SK-N-SH (cell line): ENCODE measurements at regions of chr12 and their contacts with region 1.

Region 1: GRCh38 chr12:32671930-32672780 is 6.9 kb upstream of the DNM1L start:
- DNase-seq: peak; percentile 85
- H3K4me3 ChIP-seq: no peak overlapping the region; a peak in 1 of 4 replicates
- H3K27ac ChIP-seq: peak overlapping the region in 1 of 2 experiments; percentile 36; a peak in 2 of 4 replicates
- H3K4me1 ChIP-seq: peaks cover 0 to 6% of the 10 kb centered on the region in 2 experiments; a peak in 2 of 4 replicates
- H3K27me3 ChIP-seq: no peaks in the 10 kb centered on the region
- CTCF ChIP-seq: peak; percentile 73
- EP300 ChIP-seq: peak in 1 of 2 experiments; percentile 23; a peak in 1 of 4 replicates
- RAD21 ChIP-seq: peak; percentile 90

Region 2: DNA sequence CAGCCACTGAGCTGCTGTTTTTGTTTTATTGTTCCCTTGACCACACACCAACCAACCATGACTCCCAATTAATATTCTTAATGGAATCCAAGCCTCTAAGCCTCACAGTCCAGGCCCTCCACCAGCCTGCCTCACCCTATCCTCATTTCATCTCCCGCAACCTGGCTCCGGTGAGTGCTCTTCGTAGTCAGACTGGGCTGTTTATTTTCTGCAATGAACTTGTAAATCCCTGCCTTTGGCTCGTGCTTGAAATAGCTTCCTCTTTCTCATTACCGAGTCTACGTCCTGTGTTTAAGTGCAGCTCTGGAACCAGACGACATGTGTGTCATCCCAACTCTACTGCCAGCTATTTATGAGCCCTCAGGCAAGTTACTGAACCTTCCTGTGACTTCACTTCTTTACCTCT is 1025.1 kb before region 1 on chr12:
- CTCF ChIA-PET with region 1: interaction called, 10 read pairs
- POLR2A ChIA-PET with region 1: no interaction called
- DNase-seq: peak; percentile 17
- H3K4me3 ChIP-seq: no peak overlapping the region
- H3K27ac ChIP-seq: peak overlapping the region in 1 of 2 experiments; percentile 68; a peak in 2 of 4 replicates
- H3K4me1 ChIP-seq: peaks cover 0 to 15% of the 10 kb centered on the region in 2 experiments; a peak in 2 of 4 replicates
- H3K27me3 ChIP-seq: no peaks in the 10 kb centered on the region
- CTCF ChIP-seq: no peak
- EP300 ChIP-seq: no peak
- RAD21 ChIP-seq: no peak

Region 3: DNA sequence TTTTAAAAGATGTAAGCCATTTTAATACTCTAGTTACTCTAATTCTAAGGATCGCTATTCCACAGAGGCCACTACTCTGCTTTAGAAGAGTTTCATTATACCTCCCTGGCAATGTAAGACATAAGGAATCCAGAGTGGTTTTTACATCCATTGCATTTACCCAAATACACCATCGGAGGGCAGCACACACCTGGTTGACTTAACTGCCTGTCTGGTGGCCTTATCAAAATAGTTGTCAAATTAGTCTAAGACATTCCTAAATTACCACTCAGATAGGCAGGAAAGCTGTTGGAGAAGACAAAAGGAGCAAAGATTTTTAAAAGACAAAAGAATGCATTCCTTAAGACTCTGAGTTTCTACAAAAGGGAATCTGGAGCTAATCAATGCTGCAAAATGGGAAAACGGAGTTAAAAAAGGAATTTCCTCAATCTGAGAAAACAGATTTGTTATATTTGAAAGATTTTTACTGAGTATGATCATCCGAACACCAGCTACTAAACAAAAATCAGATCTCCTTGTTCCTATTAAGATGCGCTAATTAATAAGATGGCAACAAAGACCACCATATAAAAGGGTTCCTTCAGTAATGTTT is 306.6 kb before region 1 on chr12:
- CTCF ChIA-PET with region 1: interaction called, 37 read pairs
- POLR2A ChIA-PET with region 1: no interaction called
- DNase-seq: peak; percentile 55
- H3K4me3 ChIP-seq: no peak overlapping the region
- H3K27ac ChIP-seq: no peak overlapping the region
- H3K4me1 ChIP-seq: peaks cover 0 to 5% of the 10 kb centered on the region in 2 experiments; a peak in 3 of 4 replicates
- H3K27me3 ChIP-seq: no peaks in the 10 kb centered on the region
- CTCF ChIP-seq: peak; percentile 93
- EP300 ChIP-seq: no peak
- RAD21 ChIP-seq: peak; percentile 88

Region 4: DNA sequence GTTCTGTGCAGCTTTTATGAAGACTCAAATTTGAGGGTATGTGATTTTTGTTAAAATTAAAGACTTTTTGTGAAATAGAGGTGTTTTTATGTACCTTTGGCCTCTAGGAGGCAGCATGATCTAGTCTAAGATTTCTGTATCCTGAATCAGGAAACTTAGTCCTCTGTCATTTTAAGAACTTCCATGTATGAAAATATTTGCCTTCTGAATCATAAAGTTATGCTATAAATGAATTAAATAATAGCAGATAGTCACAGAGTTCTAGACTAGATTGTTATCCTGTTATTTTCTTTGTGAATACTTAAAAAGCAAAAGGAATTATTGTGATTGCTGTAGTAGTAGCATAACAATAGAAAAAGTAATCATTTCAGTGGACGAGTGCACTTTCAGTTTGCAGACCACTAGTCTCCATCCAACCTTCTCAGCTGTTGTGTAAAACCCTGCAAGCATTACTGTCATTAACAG is 216.5 kb before region 1 on chr12:
- CTCF ChIA-PET with region 1: interaction called, 87 read pairs
- POLR2A ChIA-PET with region 1: no interaction called
- DNase-seq: peak; percentile 56
- H3K4me3 ChIP-seq: peak overlapping the region; percentile 31 to 53
- H3K27ac ChIP-seq: peak overlapping the region in 1 of 2 experiments; percentile 49; a peak in 2 of 4 replicates
- H3K4me1 ChIP-seq: peaks cover 0 to 25% of the 10 kb centered on the region in 2 experiments; a peak in 3 of 4 replicates
- H3K27me3 ChIP-seq: no peaks in the 10 kb centered on the region
- CTCF ChIP-seq: peak; percentile 84
- EP300 ChIP-seq: no peak
- RAD21 ChIP-seq: peak; percentile 90

Region 5: GRCh38 chr12:32476446-32476845 is 195.7 kb before region 1 on chr12:
- CTCF ChIA-PET with region 1: interaction called, 17 read pairs
- POLR2A ChIA-PET with region 1: no interaction called
- DNase-seq: peak; percentile 35
- H3K4me3 ChIP-seq: no peak overlapping the region
- H3K27ac ChIP-seq: peak overlapping the region in 1 of 2 experiments; percentile 71; a peak in 2 of 4 replicates
- H3K4me1 ChIP-seq: peaks cover 0 to 12% of the 10 kb centered on the region in 2 experiments; a peak in 2 of 4 replicates
- H3K27me3 ChIP-seq: no peaks in the 10 kb centered on the region
- CTCF ChIP-seq: no peak
- EP300 ChIP-seq: peak in 1 of 2 experiments; percentile 68; a peak in 2 of 4 replicates
- RAD21 ChIP-seq: no peak

Region 6: DNA sequence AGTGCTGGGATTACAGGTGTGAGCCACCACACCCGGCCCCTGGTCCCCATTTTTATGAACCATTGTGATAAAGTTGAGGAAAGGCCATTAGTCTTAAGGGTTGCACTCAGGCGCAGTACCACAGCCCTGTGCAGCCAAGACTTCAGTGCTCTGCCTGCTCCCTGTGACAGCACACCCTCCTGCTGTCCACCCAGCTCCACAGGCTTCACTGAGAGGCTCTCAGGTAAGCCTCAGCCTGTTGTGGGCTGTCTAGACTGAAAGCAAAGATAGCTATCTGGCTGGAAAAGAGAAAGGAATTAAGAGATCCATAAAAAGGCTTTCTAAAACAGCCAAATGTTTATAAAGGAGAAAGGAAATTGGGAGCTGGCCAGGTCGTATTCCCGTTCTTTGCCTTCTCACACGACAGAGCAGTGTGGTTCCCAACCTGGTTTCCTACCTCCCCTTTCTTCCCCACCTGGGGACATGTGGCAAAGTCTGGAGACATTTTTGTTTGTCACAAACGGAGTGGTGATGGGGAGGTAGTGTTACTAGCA is 12.2 kb before region 1 on chr12:
- CTCF ChIA-PET with region 1: interaction called, 12 read pairs
- POLR2A ChIA-PET with region 1: no interaction called
- DNase-seq: no peak
- H3K4me3 ChIP-seq: no peak overlapping the region
- H3K27ac ChIP-seq: no peak overlapping the region
- H3K4me1 ChIP-seq: peaks cover 0 to 3% of the 10 kb centered on the region in 2 experiments; a peak in 1 of 4 replicates
- H3K27me3 ChIP-seq: no peaks in the 10 kb centered on the region
- CTCF ChIP-seq: no peak
- EP300 ChIP-seq: no peak
- RAD21 ChIP-seq: no peak

Region 7: DNA sequence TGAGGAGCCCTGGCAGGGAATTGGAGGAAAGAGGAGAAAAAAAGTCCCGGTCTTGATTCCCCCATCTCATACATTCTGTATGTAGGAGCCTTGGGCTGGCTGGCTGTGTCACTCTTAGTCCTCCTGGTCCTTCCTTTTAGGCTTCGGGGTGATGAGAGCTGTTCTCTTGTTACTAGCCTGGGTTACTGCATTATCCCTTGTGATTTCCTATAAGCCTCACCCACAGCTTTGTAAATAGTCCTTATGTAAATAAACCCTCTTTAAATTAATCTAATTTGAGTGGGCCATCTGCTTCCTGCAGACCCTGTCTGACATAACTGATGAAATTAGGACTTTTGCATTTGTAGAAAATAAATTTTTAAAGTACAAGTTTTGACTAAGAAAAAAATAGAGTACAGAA is 26.1 kb after region 1 on chr12:
- CTCF ChIA-PET with region 1: interaction called, 13 read pairs
- POLR2A ChIA-PET with region 1: no interaction called
- DNase-seq: peak; percentile 67
- H3K4me3 ChIP-seq: no peak overlapping the region
- H3K27ac ChIP-seq: peak overlapping the region in 1 of 2 experiments; percentile 90; a peak in 2 of 4 replicates
- H3K4me1 ChIP-seq: peaks cover 5 to 20% of the 10 kb centered on the region in 2 experiments; a peak in 2 of 4 replicates
- H3K27me3 ChIP-seq: no peaks in the 10 kb centered on the region
- CTCF ChIP-seq: no peak
- EP300 ChIP-seq: peak in 1 of 2 experiments; percentile 85; a peak in 2 of 4 replicates
- RAD21 ChIP-seq: peak; percentile 6; the same call in 1 of the 2 replicates